MCF 10A (cell line): ENCODE measurements at regions of chr13 and their contacts with region 1.

Region 1: GRCh38 chr13:100235311-100235901 is 146.5 kb downstream of the PCCA start:
- DNase-seq: peak; percentile 75
- H3K4me3 Mint-ChIP-seq: peak overlapping the region; percentile 26
- H3K27ac Mint-ChIP-seq: no peak overlapping the region
- H3K4me1 Mint-ChIP-seq: peaks cover 14% of the 10 kb centered on the region
- H3K27me3 Mint-ChIP-seq: no peaks in the 10 kb centered on the region
- CTCF ChIP-seq: peak; percentile 68

Region 2: GRCh38 chr13:99916366-99917103 is 318.9 kb before region 1 on chr13:
- CTCF ChIA-PET with region 1: interaction called, 59 read pairs
- POLR2A ChIA-PET with region 1: no interaction called
- intact Hi-C with region 1: loop called (anchors 1 kb)
- DNase-seq: peak; percentile 86
- H3K4me3 Mint-ChIP-seq: no peak overlapping the region
- H3K27ac Mint-ChIP-seq: no peak overlapping the region
- H3K4me1 Mint-ChIP-seq: peaks cover 6% of the 10 kb centered on the region
- H3K27me3 Mint-ChIP-seq: no peaks in the 10 kb centered on the region
- CTCF ChIP-seq: peak; percentile 91

Region 3: DNA sequence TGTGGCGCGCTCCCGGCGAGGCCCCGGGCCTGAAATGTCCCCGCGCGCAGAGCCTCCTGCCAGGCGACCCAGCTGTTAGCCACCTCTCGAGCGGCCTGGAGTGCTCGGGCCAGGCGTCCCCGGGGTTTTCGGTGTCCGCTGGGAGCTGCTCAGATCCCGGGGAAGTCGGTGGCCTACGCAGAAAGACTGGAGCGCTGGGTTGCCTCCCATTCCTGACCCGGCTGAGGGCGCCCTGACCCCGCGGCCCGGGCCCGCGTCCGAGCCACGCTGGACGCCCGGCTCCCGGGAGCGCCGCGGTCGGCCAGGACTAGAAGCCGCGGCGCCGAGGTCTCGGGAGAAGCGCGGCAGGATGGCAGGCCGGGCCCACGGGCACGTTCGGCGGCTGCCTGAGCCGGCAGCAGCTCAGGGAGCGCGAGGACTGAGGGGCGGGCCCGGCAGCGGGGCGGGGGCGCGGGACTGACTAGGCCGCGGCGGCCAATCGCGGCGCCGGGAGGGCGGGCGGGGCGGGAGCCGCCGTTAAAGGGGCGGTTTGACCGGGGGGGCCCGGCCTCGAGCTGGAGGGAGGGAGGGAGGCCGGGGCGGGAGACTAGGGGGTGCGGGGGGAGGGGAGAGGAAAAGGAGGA is 255.1 kb before region 1 on chr13:
- CTCF ChIA-PET with region 1: interaction called, 6 read pairs
- POLR2A ChIA-PET with region 1: interaction called, 3 read pairs
- intact Hi-C with region 1: loop called (anchors 2 kb)
- DNase-seq: peak; percentile 81
- H3K4me3 Mint-ChIP-seq: peak overlapping the region; percentile 73
- H3K27ac Mint-ChIP-seq: no peak overlapping the region
- H3K4me1 Mint-ChIP-seq: peaks cover 4% of the 10 kb centered on the region
- H3K27me3 Mint-ChIP-seq: no peaks in the 10 kb centered on the region
- CTCF ChIP-seq: no peak

Region 4: GRCh38 chr13:100039740-100040139 is 195.7 kb before region 1 on chr13:
- CTCF ChIA-PET with region 1: interaction called, 9 read pairs
- POLR2A ChIA-PET with region 1: interaction called, 6 read pairs
- intact Hi-C with region 1: loop called (anchors 1 kb)
- DNase-seq: no peak
- H3K4me3 Mint-ChIP-seq: no peak overlapping the region
- H3K27ac Mint-ChIP-seq: no peak overlapping the region
- H3K4me1 Mint-ChIP-seq: no peaks in the 10 kb centered on the region
- H3K27me3 Mint-ChIP-seq: no peaks in the 10 kb centered on the region
- CTCF ChIP-seq: no peak

Region 5: GRCh38 chr13:100059827-100060226 is 175.6 kb before region 1 on chr13:
- CTCF ChIA-PET with region 1: no interaction called
- POLR2A ChIA-PET with region 1: no interaction called
- intact Hi-C with region 1: no loop called
- DNase-seq: no peak
- H3K4me3 Mint-ChIP-seq: no peak overlapping the region
- H3K27ac Mint-ChIP-seq: no peak overlapping the region
- H3K4me1 Mint-ChIP-seq: no peaks in the 10 kb centered on the region
- H3K27me3 Mint-ChIP-seq: no peaks in the 10 kb centered on the region
- CTCF ChIP-seq: no peak

Region 6: GRCh38 chr13:100520936-100521850 is 285.8 kb after region 1 on chr13:
- CTCF ChIA-PET with region 1: no interaction called
- POLR2A ChIA-PET with region 1: no interaction called
- intact Hi-C with region 1: no loop called
- DNase-seq: no peak
- H3K4me3 Mint-ChIP-seq: no peak overlapping the region
- H3K27ac Mint-ChIP-seq: no peak overlapping the region
- H3K4me1 Mint-ChIP-seq: no peaks in the 10 kb centered on the region
- H3K27me3 Mint-ChIP-seq: no peaks in the 10 kb centered on the region
- CTCF ChIP-seq: no peak